SK-N-SH (cell line): ENCODE measurements at regions of chr15 and their contacts with region 1.

Region 1: DNA sequence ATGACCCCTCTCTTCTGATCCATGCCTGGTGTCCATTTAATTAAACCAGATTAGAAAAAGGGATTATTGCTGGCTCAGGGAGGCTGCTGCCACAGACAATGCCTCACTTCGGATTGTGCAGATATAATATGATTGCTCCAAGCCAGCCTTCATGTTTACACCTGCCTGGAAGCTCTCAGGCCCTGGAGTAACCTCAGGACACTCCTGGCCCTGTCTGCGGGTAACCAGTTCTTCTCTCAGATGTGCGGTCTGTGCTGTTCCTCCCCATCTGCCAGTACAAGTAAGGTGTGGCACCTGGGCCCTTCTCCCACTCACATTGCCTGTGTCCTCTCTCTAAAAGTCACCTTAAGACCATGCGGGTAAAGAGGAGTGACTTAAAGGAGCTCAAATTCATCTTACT is 8.8 kb upstream of the GOLGA8J start:
- DNase-seq: no peak
- H3K4me3 ChIP-seq: no peak overlapping the region
- H3K27ac ChIP-seq: no peak overlapping the region
- H3K4me1 ChIP-seq: no peaks in the 10 kb centered on the region; a peak in 1 of 4 replicates
- H3K27me3 ChIP-seq: peaks cover 6% of the 10 kb centered on the region; the same call in 1 of the 2 replicates
- CTCF ChIP-seq: no peak
- EP300 ChIP-seq: no peak
- RAD21 ChIP-seq: no peak

Region 2: GRCh38 chr15:29668120-29668602 is 405.8 kb before region 1 on chr15:
- CTCF ChIA-PET with region 1: interaction called, 27 read pairs
- POLR2A ChIA-PET with region 1: no interaction called
- DNase-seq: peak; percentile 82
- H3K4me3 ChIP-seq: peak overlapping the region in 1 of 2 experiments; percentile 38; a peak in 1 of 4 replicates
- H3K27ac ChIP-seq: no peak overlapping the region
- H3K4me1 ChIP-seq: peaks cover 0 to 23% of the 10 kb centered on the region in 2 experiments; a peak in 2 of 4 replicates
- H3K27me3 ChIP-seq: no peaks in the 10 kb centered on the region
- CTCF ChIP-seq: peak; percentile 97
- EP300 ChIP-seq: no peak
- RAD21 ChIP-seq: peak; percentile 96

Region 3: GRCh38 chr15:29747837-29748417 is 326.0 kb before region 1 on chr15:
- CTCF ChIA-PET with region 1: interaction called, 27 read pairs
- POLR2A ChIA-PET with region 1: no interaction called
- DNase-seq: peak; percentile 17
- H3K4me3 ChIP-seq: no peak overlapping the region
- H3K27ac ChIP-seq: no peak overlapping the region
- H3K4me1 ChIP-seq: no peaks in the 10 kb centered on the region; a peak in 1 of 4 replicates
- H3K27me3 ChIP-seq: no peaks in the 10 kb centered on the region
- CTCF ChIP-seq: peak; percentile 77
- EP300 ChIP-seq: no peak
- RAD21 ChIP-seq: peak; percentile 61

Region 4: DNA sequence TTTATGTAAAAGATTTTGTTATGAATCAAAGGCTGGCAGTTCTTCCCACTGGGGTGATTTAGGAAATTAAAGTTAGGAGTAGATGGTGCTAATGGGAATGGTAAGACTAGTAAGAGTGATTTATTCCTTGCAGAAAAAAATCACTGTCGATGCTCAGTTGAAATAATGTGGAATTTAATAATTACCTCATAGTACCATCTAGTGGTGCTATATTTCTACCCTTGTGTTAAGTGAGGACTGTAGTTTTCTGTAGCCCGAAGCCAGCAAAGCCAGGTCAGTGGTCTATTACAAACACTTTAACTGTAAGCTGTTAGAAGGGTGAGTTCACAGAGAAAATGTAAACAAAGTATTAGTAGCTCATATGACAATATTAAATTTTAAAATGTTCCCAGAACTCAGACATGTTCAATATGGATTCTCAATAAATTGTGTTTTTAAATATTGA is 30.7 kb before region 1 on chr15:
- CTCF ChIA-PET with region 1: interaction called, 16 read pairs
- POLR2A ChIA-PET with region 1: no interaction called
- DNase-seq: peak; percentile 40
- H3K4me3 ChIP-seq: no peak overlapping the region
- H3K27ac ChIP-seq: no peak overlapping the region
- H3K4me1 ChIP-seq: peaks cover 0 to 12% of the 10 kb centered on the region in 2 experiments; a peak in 2 of 4 replicates
- H3K27me3 ChIP-seq: no peaks in the 10 kb centered on the region
- CTCF ChIP-seq: peak; percentile 46
- EP300 ChIP-seq: no peak
- RAD21 ChIP-seq: peak; percentile 65

Region 5: DNA sequence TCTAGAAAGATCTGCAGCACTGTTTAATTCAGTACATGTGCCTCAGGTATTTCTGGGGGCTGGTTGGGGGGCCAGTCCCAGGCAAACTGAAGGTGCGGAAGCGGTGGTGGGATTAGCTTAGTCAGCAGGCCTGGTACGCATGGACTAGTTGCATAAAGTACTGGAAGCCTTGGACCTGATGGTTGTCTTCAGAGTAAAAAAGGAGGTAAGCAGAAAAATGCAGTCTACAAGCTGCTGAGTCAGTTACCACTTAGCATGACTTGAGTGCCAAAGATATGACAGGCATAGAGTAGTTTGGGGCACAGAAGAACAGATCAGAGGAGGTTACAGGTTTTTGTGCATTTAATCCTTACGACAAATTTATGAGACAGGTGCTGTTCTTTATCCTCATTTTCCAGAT is 11.0 kb before region 1 on chr15:
- CTCF ChIA-PET with region 1: interaction called, 19 read pairs
- POLR2A ChIA-PET with region 1: no interaction called
- DNase-seq: no peak
- H3K4me3 ChIP-seq: no peak overlapping the region
- H3K27ac ChIP-seq: no peak overlapping the region
- H3K4me1 ChIP-seq: no peaks in the 10 kb centered on the region
- H3K27me3 ChIP-seq: no peaks in the 10 kb centered on the region; the same call in 1 of the 2 replicates
- CTCF ChIP-seq: no peak
- EP300 ChIP-seq: no peak
- RAD21 ChIP-seq: no peak